ENCODE measurements at regions of chr12 and their contacts with region 1.

Region 1: GRCh38 chr12:1650260-1650977 is 21.4 kb downstream of the WNT5B start:
- DNase-seq: peak in 1 of 5 donors; percentile 37
- ATAC-seq: peak; percentile 76 to 84 (median 80)
- H3K4me3 ChIP-seq: peak overlapping the region in 2 of 12 donors; percentile 3 to 13
- H3K27ac ChIP-seq: peak overlapping the region in 11 of 12 donors; percentile 6 to 80 (median 61)
- H3K4me1 ChIP-seq: peaks cover 0 to 37% (median 21%) of the 10 kb centered on the region in 12 donors
- H3K27me3 ChIP-seq: no peaks in the 10 kb centered on the region
- CTCF ChIP-seq: no peak
- POLR2A ChIP-seq: no peak

Region 2: GRCh38 chr12:1933342-1934051 is 283.1 kb after region 1 on chr12:
- intact Hi-C with region 1: loop called in 9 of 10 experiments (anchors 1 to 5 kb)
- DNase-seq: peak in 1 of 5 donors; percentile 16
- ATAC-seq: no peak
- H3K4me3 ChIP-seq: no peak overlapping the region
- H3K27ac ChIP-seq: peak overlapping the region in 1 of 12 donors; percentile 58
- H3K4me1 ChIP-seq: peaks cover 0 to 47% (median 6%) of the 10 kb centered on the region in 12 donors
- H3K27me3 ChIP-seq: no peaks in the 10 kb centered on the region
- CTCF ChIP-seq: no peak
- POLR2A ChIP-seq: no peak